Activated CD4-positive, alpha-beta memory T cell treated with anti-CD3 and anti-CD28 coated beads for 36 hours (primary cell): ENCODE measurements at regions of chr7 and their contacts with region 1.

Region 1: GRCh38 chr7:87933945-87934698 is at the start of gene ADAM22:
- DNase-seq: peak; percentile 89
- H3K4me3 Mint-ChIP-seq: peak within 1 kb of the TSS; percentile 81
- H3K27ac Mint-ChIP-seq: no peak within 1 kb of the TSS
- H3K4me1 Mint-ChIP-seq: peaks cover 9% of the 10 kb centered on the region
- H3K27me3 Mint-ChIP-seq: peaks cover 5% of the 10 kb centered on the region
- total RNA-seq, gene ADAM22: 1.8 to 2.2 TPM

Region 2: DNA sequence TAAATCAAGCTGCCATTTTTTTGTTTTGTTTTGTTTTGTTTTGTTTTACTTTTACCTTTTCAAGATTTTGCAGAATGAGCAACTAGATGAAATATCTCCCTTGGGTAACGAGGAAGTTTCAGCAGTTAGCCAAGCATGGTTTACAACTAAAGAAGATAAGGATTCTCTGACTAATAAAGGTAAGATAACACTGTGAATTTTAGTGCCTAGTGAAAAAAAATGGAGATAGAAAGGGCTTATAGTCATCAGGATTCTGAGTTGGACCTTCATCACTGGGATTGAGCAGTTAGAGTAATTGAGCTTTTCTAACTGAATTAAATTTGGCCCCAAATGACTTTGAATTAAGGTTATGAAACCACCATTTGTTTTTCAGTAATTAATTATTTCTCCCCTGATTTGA is 760.7 kb before region 1 on chr7:
- CTCF ChIA-PET with region 1: no interaction called
- POLR2A ChIA-PET with region 1: no interaction called
- intact Hi-C with region 1: no loop called
- DNase-seq: no peak
- H3K4me3 Mint-ChIP-seq: no peak overlapping the region
- H3K27ac Mint-ChIP-seq: no peak overlapping the region
- H3K4me1 Mint-ChIP-seq: peaks cover 19% of the 10 kb centered on the region
- H3K27me3 Mint-ChIP-seq: no peaks in the 10 kb centered on the region

Region 3: GRCh38 chr7:88027724-88028123 is 93.6 kb after region 1 on chr7:
- CTCF ChIA-PET with region 1: no interaction called
- POLR2A ChIA-PET with region 1: no interaction called
- intact Hi-C with region 1: no loop called
- DNase-seq: no peak
- H3K4me3 Mint-ChIP-seq: no peak overlapping the region
- H3K27ac Mint-ChIP-seq: no peak overlapping the region
- H3K4me1 Mint-ChIP-seq: no peaks in the 10 kb centered on the region
- H3K27me3 Mint-ChIP-seq: no peaks in the 10 kb centered on the region

Region 4: GRCh38 chr7:88219781-88220747 is 285.9 kb after region 1 on chr7 and contains the start of gene SRI:
- CTCF ChIA-PET with region 1: no interaction called
- POLR2A ChIA-PET with region 1: no interaction called
- intact Hi-C with region 1: loop called (anchors 1 kb)
- DNase-seq: peak; percentile 92
- H3K4me3 Mint-ChIP-seq: peak within 1 kb of the TSS; percentile 87
- H3K27ac Mint-ChIP-seq: peak within 1 kb of the TSS; percentile 89
- H3K4me1 Mint-ChIP-seq: peaks cover 15% of the 10 kb centered on the region
- H3K27me3 Mint-ChIP-seq: no peaks in the 10 kb centered on the region
- total RNA-seq, gene SRI: 219 to 220 TPM